Naive thymus-derived CD8-positive, alpha-beta T cell (primary cell): ENCODE measurements at regions of chr11 and their contacts with region 1.

Region 1: GRCh38 chr11:128733440-128734102 is 39.7 kb downstream of the FLI1 start:
- DNase-seq: peak in 4 of 10 donors; percentile 25 to 40 (median 30)
- ATAC-seq: peak; percentile 49 to 50
- H3K4me3 Mint-ChIP-seq: peak overlapping the region; percentile 67 to 93 (median 84)
- H3K27ac Mint-ChIP-seq: peak overlapping the region; percentile 82 to 97 (median 92)
- H3K4me1 Mint-ChIP-seq: peaks cover 59 to 100% (median 99%) of the 10 kb centered on the region in 4 donors
- H3K27me3 Mint-ChIP-seq: no peaks in the 10 kb centered on the region

Region 2: GRCh38 chr11:128669506-128670270 is 63.9 kb before region 1 on chr11:
- POLR2A ChIA-PET with region 1: no interaction called
- DNase-seq: no peak
- ATAC-seq: no peak
- H3K4me3 Mint-ChIP-seq: no peak overlapping the region
- H3K27ac Mint-ChIP-seq: no peak overlapping the region
- H3K4me1 Mint-ChIP-seq: peaks cover 0 to 2% (median 0%) of the 10 kb centered on the region in 4 donors
- H3K27me3 Mint-ChIP-seq: peaks cover 0 to 5% (median 0%) of the 10 kb centered on the region in 5 donors

Region 3: GRCh38 chr11:128720522-128720985 is 13.0 kb before region 1 on chr11:
- POLR2A ChIA-PET with region 1: interaction called, 81 read pairs
- DNase-seq: peak in 7 of 10 donors; percentile 18 to 65 (median 40)
- ATAC-seq: peak; percentile 32 to 50
- H3K4me3 Mint-ChIP-seq: peak overlapping the region; percentile 76 to 94 (median 86)
- H3K27ac Mint-ChIP-seq: peak overlapping the region; percentile 93 to 98 (median 96)
- H3K4me1 Mint-ChIP-seq: peaks cover 78 to 100% (median 99%) of the 10 kb centered on the region in 4 donors
- H3K27me3 Mint-ChIP-seq: peaks cover 0 to 1% (median 0%) of the 10 kb centered on the region in 5 donors

Region 4: GRCh38 chr11:128745311-128746136 is 12.0 kb after region 1 on chr11:
- POLR2A ChIA-PET with region 1: interaction called, 81 read pairs
- DNase-seq: no peak
- ATAC-seq: no peak
- H3K4me3 Mint-ChIP-seq: peak overlapping the region in 8 of 10 donors; percentile 1 to 60 (median 18)
- H3K27ac Mint-ChIP-seq: peak overlapping the region in 9 of 10 donors; percentile 46 to 86 (median 79)
- H3K4me1 Mint-ChIP-seq: peaks cover 46 to 98% (median 92%) of the 10 kb centered on the region in 4 donors
- H3K27me3 Mint-ChIP-seq: no peaks in the 10 kb centered on the region